ENCODE measurements at regions of chr16 and their contacts with region 1.

Region 1: GRCh38 chr16:75653922-75654321 is 6.3 kb downstream of the TERF2IP start:
- DNase-seq: no peak
- H3K4me3 ChIP-seq: no peak overlapping the region
- H3K27ac ChIP-seq: no peak overlapping the region
- H3K4me1 ChIP-seq: peaks cover 10% of the 10 kb centered on the region
- H3K27me3 ChIP-seq: no peaks in the 10 kb centered on the region
- CTCF ChIP-seq: no peak

Region 2: DNA sequence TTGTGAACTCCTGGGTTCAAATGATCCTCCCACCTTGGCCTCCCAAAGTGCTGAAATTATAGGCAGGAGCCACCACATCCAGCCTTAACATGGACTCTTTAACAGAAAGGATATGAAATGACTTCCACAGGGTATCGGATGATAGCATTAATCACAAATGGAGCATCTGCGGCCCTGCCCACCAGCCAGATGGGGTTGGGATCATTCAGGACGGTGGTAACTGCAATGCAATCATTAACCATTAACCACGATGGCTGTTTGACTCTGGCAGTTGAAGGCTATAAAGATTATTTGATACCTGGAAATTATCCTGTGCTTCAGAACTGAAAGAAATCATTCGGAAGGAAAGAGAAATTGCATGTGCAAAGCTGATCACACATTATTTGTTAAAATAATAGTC is 112.7 kb before region 1 on chr16:
- intact Hi-C with region 1: no loop called
- DNase-seq: peak; percentile 78
- H3K4me3 ChIP-seq: no peak overlapping the region
- H3K27ac ChIP-seq: peak overlapping the region; percentile 66
- H3K4me1 ChIP-seq: no peaks in the 10 kb centered on the region
- H3K27me3 ChIP-seq: no peaks in the 10 kb centered on the region
- CTCF ChIP-seq: no peak

Region 3: GRCh38 chr16:75764154-75764768 is 110.3 kb after region 1 on chr16:
- intact Hi-C with region 1: loop called (anchors 5 kb)
- DNase-seq: peak; percentile 60
- H3K4me3 ChIP-seq: no peak overlapping the region
- H3K27ac ChIP-seq: no peak overlapping the region
- H3K4me1 ChIP-seq: no peaks in the 10 kb centered on the region
- H3K27me3 ChIP-seq: no peaks in the 10 kb centered on the region
- CTCF ChIP-seq: peak; percentile 73

Measured in colonic mucosa (tissue), 4 donors.